Common myeloid progenitor, CD34-positive (primary cell): ENCODE measurements at regions of chr17 and their contacts with region 1.

Region 1: GRCh38 chr17:7351665-7352501 is at the start of gene KCTD11:
- DNase-seq: peak in 2 of 3 donors; percentile 26 to 57
- H3K4me3 ChIP-seq: peak within 1 kb of the TSS in 6 of 7 experiments; percentile 52 to 85 (median 74)
- H3K27ac ChIP-seq: peak within 1 kb of the TSS in 1 of 2 experiments; percentile 49
- H3K4me1 ChIP-seq: peaks cover 0 to 35% (median 14%) of the 10 kb centered on the region in 4 experiments
- H3K27me3 ChIP-seq: no peaks in the 10 kb centered on the region

Region 2: GRCh38 chr17:7242717-7243576 is 108.9 kb before region 1 on chr17:
- CTCF ChIA-PET with region 1: no interaction called
- POLR2A ChIA-PET with region 1: no interaction called
- DNase-seq: peak; percentile 97 to 98 (median 97)
- H3K4me3 ChIP-seq: peak overlapping the region; percentile 91 to 100 (median 96)
- H3K27ac ChIP-seq: peak overlapping the region; percentile 98
- H3K4me1 ChIP-seq: peaks cover 16 to 33% (median 29%) of the 10 kb centered on the region in 4 experiments
- H3K27me3 ChIP-seq: no peaks in the 10 kb centered on the region

Region 3: DNA sequence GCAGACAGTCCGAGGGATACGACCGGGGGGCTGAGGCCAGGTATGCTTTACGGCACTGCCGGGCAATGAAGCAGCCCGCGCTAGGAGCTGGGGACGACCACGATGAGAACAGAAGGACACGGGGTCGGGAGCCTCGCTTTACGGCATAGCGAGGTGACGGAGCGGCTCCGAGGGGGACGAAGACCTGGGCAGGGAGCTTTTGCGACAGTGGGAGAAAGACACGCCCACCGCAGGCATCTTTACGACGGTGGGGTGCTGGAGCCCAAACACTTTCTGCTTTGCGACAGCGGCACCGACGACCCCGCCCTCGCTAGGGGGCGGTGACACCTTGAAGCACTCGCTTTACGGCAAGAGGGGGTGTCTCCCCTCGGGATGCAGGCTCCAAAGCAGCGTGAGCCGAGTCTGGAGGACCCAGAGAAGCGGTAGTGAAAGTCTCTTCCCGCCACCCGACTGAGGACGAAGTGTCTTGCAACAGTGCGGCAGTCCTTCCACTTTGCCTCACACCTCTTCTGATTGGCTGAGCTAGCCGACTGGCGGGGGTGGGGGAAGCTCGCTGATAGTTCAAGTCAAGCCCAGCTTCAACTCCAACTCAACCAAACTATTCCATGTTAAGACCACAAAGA is 22.4 kb before region 1 on chr17:
- CTCF ChIA-PET with region 1: interaction called, 314 read pairs
- POLR2A ChIA-PET with region 1: no interaction called
- DNase-seq: peak; percentile 99 to 100 (median 100)
- H3K4me3 ChIP-seq: peak overlapping the region; percentile 74 to 97 (median 90)
- H3K27ac ChIP-seq: peak overlapping the region; percentile 66 to 87
- H3K4me1 ChIP-seq: peaks cover 5 to 38% (median 33%) of the 10 kb centered on the region in 4 experiments
- H3K27me3 ChIP-seq: no peaks in the 10 kb centered on the region

Region 4: GRCh38 chr17:7336240-7337175 is 15.4 kb before region 1 on chr17 and contains the start of gene ACAP1:
- CTCF ChIA-PET with region 1: interaction called, 314 read pairs
- POLR2A ChIA-PET with region 1: interaction called, 4 read pairs
- DNase-seq: peak in 2 of 3 donors; percentile 68 to 69
- H3K4me3 ChIP-seq: peak within 1 kb of the TSS; percentile 51 to 83 (median 76)
- H3K27ac ChIP-seq: peak within 1 kb of the TSS; percentile 46 to 79
- H3K4me1 ChIP-seq: peaks cover 12 to 49% (median 45%) of the 10 kb centered on the region in 4 experiments
- H3K27me3 ChIP-seq: no peaks in the 10 kb centered on the region

Region 5: DNA sequence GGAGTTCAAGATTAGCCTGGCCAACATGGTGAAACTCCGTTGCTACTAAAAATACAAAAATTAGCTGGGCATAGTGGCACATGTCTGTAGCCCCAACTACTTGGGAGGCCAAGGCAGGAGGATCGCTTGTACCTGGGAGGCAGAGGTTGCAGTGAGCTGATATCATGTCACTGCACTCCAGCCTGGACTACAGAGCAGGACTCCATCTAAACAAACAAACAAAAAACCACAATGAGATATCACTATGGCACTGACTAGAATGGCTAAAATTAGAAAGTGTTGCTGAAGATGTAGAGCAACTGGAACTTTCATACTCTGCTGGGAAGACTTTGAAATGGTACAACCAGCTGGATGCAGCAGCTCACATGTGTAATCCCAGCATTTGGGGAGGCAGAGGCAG is 22.5 kb after region 1 on chr17:
- CTCF ChIA-PET with region 1: interaction called, 13 read pairs
- POLR2A ChIA-PET with region 1: interaction called, 3 read pairs
- DNase-seq: no peak
- H3K4me3 ChIP-seq: no peak overlapping the region
- H3K27ac ChIP-seq: no peak overlapping the region
- H3K4me1 ChIP-seq: no peaks in the 10 kb centered on the region
- H3K27me3 ChIP-seq: peaks cover 0 to 4% (median 0%) of the 10 kb centered on the region in 5 experiments